Naive thymus-derived CD8-positive, alpha-beta T cell (primary cell): ENCODE measurements at regions of chr17 and their contacts with region 1.

Region 1: GRCh38 chr17:58317421-58318064 is 11.1 kb downstream of the TSPOAP1 start:
- DNase-seq: peak; percentile 44 to 88 (median 72)
- ATAC-seq: peak; percentile 97
- H3K4me3 Mint-ChIP-seq: peak overlapping the region in 6 of 10 donors; percentile 16 to 57 (median 37)
- H3K27ac Mint-ChIP-seq: peak overlapping the region; percentile 46 to 95 (median 89)
- H3K4me1 Mint-ChIP-seq: peaks cover 10 to 20% (median 15%) of the 10 kb centered on the region in 4 donors
- H3K27me3 Mint-ChIP-seq: no peaks in the 10 kb centered on the region

Region 2: GRCh38 chr17:58294034-58294433 is 23.5 kb before region 1 on chr17:
- POLR2A ChIA-PET with region 1: no interaction called
- DNase-seq: no peak
- ATAC-seq: no peak
- H3K4me3 Mint-ChIP-seq: no peak overlapping the region
- H3K27ac Mint-ChIP-seq: peak overlapping the region in 1 of 10 donors; percentile 9
- H3K4me1 Mint-ChIP-seq: no peaks in the 10 kb centered on the region
- H3K27me3 Mint-ChIP-seq: peaks cover 4 to 17% (median 7%) of the 10 kb centered on the region in 5 donors

Region 3: GRCh38 chr17:58329035-58329809 is 11.7 kb after region 1 on chr17:
- POLR2A ChIA-PET with region 1: interaction called, 1,631 read pairs
- DNase-seq: peak; percentile 49 to 81 (median 64)
- ATAC-seq: peak; percentile 19 to 49
- H3K4me3 Mint-ChIP-seq: peak overlapping the region; percentile 82 to 100 (median 96)
- H3K27ac Mint-ChIP-seq: peak overlapping the region; percentile 86 to 98 (median 95)
- H3K4me1 Mint-ChIP-seq: peaks cover 41 to 65% (median 50%) of the 10 kb centered on the region in 4 donors
- H3K27me3 Mint-ChIP-seq: no peaks in the 10 kb centered on the region

Region 4: DNA sequence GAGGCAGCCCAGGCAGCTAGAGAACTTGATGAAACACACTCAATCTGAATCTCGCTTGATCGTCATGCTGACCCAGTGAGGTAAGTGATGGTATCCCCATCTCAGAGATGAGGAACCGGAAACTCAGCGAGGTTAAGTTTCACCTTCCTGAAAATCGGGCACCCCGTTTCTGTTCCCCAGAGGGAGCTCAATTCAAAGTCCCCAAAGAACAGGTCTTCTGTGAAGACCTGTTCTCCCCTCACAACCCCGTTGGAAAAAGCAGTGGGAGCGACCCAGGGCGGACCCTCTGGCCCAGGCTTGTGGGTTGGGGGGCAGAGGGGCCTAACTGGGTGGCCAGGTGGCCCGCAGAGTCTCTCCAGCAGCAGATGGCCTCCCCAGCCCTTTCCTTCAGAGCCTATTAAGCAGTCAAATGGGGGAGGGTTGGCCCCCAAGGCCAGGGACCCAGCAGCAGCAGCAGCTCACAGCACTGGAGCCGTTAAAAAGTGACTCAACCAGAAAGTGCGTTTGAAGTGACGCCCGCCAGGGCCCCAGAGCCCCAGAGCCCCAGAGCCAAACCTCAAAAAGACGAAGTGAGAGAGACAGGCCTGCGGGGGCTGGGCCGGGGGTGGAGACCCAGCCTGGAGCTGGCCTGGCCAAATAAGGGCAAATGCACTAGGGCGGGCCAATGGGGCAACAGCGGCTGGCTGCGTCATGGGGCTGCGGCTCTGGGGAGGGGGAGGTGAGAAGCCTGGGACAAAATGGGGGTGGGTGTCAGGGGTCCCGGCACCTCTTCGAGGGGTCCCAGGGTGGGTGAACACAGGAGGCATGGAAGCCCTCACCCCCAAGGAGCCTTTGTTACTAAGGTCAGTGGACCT is 20.3 kb after region 1 on chr17:
- POLR2A ChIA-PET with region 1: interaction called, 1,631 read pairs
- DNase-seq: peak; percentile 74 to 95 (median 88)
- ATAC-seq: peak; percentile 67 to 79
- H3K4me3 Mint-ChIP-seq: peak overlapping the region; percentile 82 to 100 (median 96)
- H3K27ac Mint-ChIP-seq: peak overlapping the region; percentile 91 to 99 (median 96)
- H3K4me1 Mint-ChIP-seq: peaks cover 49 to 89% (median 75%) of the 10 kb centered on the region in 4 donors
- H3K27me3 Mint-ChIP-seq: no peaks in the 10 kb centered on the region

Region 5: DNA sequence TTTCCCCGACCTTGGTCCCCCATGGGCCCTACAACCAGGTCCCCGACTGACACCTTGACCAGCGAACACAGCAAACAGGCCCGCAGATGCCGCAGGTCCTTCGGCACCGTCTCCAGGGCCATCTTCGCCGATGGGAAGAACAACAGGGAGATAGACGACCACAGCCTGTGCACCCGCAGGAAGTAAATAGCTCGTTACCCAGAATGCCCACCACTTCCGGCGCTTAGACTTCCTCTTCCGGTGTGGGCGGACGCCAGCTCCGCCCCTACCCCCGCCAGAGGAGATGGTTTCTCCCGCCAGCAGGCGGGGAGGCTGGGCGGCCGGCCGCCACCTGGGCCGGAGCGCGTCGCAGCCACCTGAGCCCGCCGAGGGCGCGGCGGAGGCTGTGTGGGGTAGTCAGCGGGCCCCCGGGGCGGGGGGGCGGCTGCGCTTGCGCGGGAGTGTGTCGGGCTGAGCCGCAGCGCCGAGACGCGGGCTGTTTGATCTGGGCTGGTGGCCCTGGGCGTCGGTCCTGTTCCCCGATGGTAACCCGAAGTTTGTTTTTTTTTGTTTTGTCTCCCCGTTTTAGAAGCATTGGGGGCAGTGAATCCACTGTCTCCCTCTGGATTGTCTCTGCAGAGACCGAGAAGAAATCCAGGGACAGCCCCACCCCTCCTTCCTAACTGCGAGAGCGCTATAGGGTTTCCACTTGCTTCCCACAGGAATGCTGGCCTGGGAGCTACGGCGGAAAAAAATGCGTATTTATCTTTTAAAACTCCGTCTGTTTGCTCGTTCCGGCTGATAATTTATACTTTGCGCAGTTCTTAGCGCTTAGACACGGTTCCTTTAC is 34.7 kb after region 1 on chr17 and contains the start of gene SUPT4H1:
- POLR2A ChIA-PET with region 1: interaction called, 1,631 read pairs
- DNase-seq: peak; percentile 86 to 94 (median 90)
- ATAC-seq: peak; percentile 92
- H3K4me3 Mint-ChIP-seq: peak within 1 kb of the TSS; percentile 99 to 100 (median 100)
- H3K27ac Mint-ChIP-seq: peak within 1 kb of the TSS; percentile 97 to 100 (median 99)
- H3K4me1 Mint-ChIP-seq: peaks cover 41 to 75% (median 69%) of the 10 kb centered on the region in 4 donors
- H3K27me3 Mint-ChIP-seq: no peaks in the 10 kb centered on the region
- polyA plus RNA-seq, gene SUPT4H1: 63.7 to 97.4 (median 76.1) TPM

Region 6: DNA sequence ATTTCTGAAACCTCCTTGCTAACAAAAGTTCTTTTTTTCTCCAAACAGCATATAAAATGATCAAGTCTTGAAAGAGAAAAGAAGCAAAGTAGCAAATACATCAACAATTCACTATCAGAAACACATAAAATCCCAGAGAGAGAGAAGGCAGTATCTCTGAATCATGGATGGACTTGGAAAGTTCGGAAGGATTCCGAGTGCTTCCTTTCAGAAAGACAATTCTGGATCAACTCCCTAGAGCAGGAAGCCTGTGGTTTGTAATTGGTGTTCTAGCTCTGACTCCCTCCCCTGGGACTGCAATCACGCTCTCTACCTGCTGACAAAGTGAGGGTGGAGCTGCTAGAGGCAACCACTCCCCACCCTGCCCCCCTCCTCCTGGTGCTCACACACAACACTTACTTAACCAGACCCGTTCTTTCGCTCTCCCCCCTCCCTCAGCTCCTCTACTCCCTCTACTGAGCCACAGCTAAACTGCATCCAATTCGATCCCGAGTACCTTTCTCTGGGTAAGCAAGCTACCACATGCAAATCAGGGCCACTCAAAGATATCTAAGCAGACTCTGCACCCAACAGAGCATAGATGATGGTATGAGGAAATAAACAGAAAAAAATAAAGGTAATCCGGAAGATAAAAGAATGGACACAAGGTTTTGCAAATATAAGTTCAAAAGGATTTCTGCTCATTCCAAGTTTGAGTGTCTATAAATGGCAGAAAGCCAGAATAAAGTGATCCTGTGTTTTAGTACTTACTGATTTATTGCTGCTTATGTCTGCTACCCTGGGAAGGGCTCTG is 100.0 kb after region 1 on chr17 and contains the start of gene RNF43:
- POLR2A ChIA-PET with region 1: interaction called, 13 read pairs
- DNase-seq: peak; percentile 62 to 94 (median 86)
- ATAC-seq: peak; percentile 100
- H3K4me3 Mint-ChIP-seq: peak within 1 kb of the TSS in 2 of 10 donors; percentile 5 to 52
- H3K27ac Mint-ChIP-seq: peak within 1 kb of the TSS in 8 of 10 donors; percentile 17 to 80 (median 64)
- H3K4me1 Mint-ChIP-seq: peaks cover 3 to 15% (median 12%) of the 10 kb centered on the region in 4 donors
- H3K27me3 Mint-ChIP-seq: no peaks in the 10 kb centered on the region
- polyA plus RNA-seq, gene RNF43: 0.07 to 0.90 (median 0.75) TPM

Region 7: DNA sequence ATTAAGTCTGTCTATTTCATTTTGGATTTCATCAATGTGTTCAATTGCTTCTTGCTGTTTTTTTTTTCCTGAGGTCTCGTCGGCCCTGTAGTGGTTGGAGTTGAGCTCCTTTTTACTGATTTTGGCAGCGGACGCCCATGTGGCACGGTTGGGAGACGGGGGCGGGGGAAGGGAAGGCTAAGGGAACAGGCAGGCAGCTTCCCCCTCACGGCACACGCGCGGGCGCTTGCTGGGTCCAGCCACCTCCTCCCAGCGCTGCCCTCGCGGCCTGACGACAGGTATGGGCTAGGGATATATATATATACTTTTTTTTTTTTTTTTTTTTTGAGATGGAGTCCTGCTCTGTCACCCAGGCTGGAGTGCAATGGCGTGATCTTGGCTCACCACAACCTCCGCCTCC is 159.3 kb after region 1 on chr17:
- POLR2A ChIA-PET with region 1: no interaction called
- DNase-seq: no peak
- ATAC-seq: no peak
- H3K4me3 Mint-ChIP-seq: no peak overlapping the region
- H3K27ac Mint-ChIP-seq: no peak overlapping the region
- H3K4me1 Mint-ChIP-seq: peaks cover 0 to 2% (median 0%) of the 10 kb centered on the region in 4 donors
- H3K27me3 Mint-ChIP-seq: no peaks in the 10 kb centered on the region

Region 8: DNA sequence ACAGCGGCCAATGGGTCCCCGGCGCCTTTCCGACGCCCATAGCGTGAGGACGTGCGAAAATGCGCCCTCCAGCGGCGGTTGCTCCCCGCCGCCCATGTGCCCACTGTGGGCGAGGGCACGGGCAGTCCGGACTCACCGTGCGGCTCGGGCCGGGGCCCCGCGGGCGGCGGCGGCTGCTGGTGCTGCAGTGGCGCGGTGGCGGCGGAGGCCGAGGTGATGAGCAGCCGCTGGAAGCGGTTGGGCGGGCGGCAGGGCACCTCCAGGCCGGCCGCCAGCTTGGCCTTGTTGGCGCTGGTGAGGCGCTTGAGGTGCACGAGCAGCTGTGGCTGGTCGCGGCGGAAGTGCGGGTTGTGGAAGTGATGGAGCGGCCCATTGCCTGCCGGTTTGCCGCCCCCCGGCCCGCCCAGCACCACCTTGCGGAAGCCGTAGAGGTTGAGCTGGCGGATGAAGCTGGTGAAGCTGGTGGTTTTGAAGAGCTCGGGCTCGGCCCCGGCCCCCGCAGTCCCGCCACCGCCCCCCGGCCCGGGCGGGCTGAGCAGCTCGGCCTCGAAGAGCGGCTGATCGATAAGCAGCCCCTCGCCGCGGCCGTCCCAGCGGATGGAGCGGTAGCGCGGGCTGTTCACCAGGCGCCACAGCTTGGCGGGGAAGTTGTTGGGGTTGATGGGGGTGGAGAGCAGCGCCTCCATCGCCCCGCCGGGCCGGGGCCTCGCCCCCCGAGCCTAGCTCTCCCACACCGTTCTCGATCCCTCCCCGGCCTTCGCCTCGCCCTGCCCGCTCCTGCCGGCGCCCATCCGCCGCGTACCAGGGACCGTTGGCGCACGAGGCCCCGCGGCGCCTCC is 170.3 kb after region 1 on chr17 and contains the start of gene HSF5:
- POLR2A ChIA-PET with region 1: interaction called, 13 read pairs
- DNase-seq: peak; percentile 61 to 89 (median 76)
- ATAC-seq: peak; percentile 94 to 96
- H3K4me3 Mint-ChIP-seq: peak within 1 kb of the TSS; percentile 41 to 82 (median 69)
- H3K27ac Mint-ChIP-seq: peak within 1 kb of the TSS in 9 of 10 donors; percentile 47 to 88 (median 56)
- H3K4me1 Mint-ChIP-seq: peaks cover 5 to 22% (median 8%) of the 10 kb centered on the region in 4 donors
- H3K27me3 Mint-ChIP-seq: no peaks in the 10 kb centered on the region
- polyA plus RNA-seq, gene HSF5: 0.14 to 1.8 (median 0.73) TPM